Activated CD4-positive, alpha-beta memory T cell treated with anti-CD3 and anti-CD28 coated beads for 36 hours (primary cell): ENCODE measurements at regions of chr17 and their contacts with region 1.

Region 1: DNA sequence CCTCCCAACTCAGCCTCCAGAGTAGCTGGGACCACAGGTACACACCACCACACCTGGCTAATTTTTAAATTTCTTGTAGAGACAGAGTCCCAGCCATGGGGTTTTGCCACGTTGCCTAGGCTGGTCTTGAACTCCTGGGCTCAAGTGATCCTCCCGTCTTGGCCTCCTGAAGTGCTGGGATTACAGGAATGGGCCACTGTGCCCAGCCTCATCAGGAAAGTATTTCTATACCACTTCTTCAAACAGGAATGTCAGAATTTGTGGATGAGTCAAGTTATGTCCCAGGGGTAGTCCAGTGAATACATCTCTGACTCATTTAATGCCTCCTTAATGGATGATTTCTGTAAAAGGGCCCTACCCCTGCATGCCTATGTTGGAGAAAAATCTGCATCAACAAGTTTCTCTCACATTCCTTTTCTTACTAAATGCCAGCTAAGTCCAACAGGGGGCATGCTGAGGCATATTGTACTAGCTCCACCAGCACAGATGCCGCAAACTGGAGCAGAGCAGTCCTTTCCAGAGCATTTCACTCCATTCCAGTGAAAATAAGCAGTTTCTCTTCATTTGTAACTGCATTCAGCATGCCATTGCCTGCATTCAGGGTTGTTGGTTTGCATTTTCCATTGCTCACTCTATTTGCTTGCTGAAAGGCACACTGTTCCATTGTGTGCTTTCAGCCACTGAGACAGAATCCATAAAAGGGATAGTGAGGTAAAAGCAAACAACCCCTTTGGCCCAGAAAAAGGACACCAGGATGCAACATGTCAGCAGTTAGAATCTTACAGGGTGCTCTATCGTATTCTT is 5.3 kb upstream of the CAVIN1 start:
- DNase-seq: peak; percentile 44
- H3K4me3 Mint-ChIP-seq: no peak overlapping the region
- H3K27ac Mint-ChIP-seq: no peak overlapping the region
- H3K4me1 Mint-ChIP-seq: no peaks in the 10 kb centered on the region
- H3K27me3 Mint-ChIP-seq: peaks cover 11% of the 10 kb centered on the region

Region 2: DNA sequence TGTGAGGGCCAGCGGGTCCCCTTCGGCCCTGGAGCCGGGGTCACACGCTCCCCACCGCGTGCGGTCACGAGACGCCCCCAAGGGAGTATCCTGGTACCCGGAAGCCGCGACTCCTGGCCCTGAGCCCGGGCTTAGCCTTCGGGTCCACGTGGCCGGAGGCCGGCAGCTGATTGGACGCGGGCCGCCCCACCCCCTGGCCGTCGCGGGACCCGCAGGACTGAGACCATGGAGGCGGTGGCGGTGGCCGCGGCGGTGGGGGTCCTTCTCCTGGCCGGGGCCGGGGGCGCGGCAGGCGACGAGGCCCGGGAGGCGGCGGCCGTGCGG is 107.7 kb after region 1 on chr17 and contains the start of gene NAGLU:
- CTCF ChIA-PET with region 1: interaction called, 10 read pairs
- POLR2A ChIA-PET with region 1: no interaction called
- intact Hi-C with region 1: no loop called
- DNase-seq: peak; percentile 91
- H3K4me3 Mint-ChIP-seq: peak within 1 kb of the TSS; percentile 87
- H3K27ac Mint-ChIP-seq: peak within 1 kb of the TSS; percentile 74
- H3K4me1 Mint-ChIP-seq: peaks cover 32% of the 10 kb centered on the region
- H3K27me3 Mint-ChIP-seq: peaks cover 4% of the 10 kb centered on the region
- total RNA-seq, gene NAGLU: 12.2 to 13.9 TPM

Region 3: GRCh38 chr17:43068570-43069367 is 640.4 kb after region 1 on chr17:
- CTCF ChIA-PET with region 1: no interaction called
- POLR2A ChIA-PET with region 1: no interaction called
- intact Hi-C with region 1: no loop called
- DNase-seq: no peak
- H3K4me3 Mint-ChIP-seq: no peak overlapping the region
- H3K27ac Mint-ChIP-seq: no peak overlapping the region
- H3K4me1 Mint-ChIP-seq: no peaks in the 10 kb centered on the region
- H3K27me3 Mint-ChIP-seq: no peaks in the 10 kb centered on the region